Activated CD8-positive, alpha-beta T cell treated with anti-CD3 and anti-CD28 coated beads, Interleukin-2, amount 10 ng/mL, durations not matched to agents 7 days and 5 days (primary cell): ENCODE measurements at regions of chr1 and their contacts with region 1.

Region 1: GRCh38 chr1:206912445-206913095 is 9.2 kb downstream of the FCMR start:
- DNase-seq: peak; percentile 80
- ATAC-seq: peak; percentile 64
- H3K4me3 Mint-ChIP-seq: no peak overlapping the region
- H3K27ac Mint-ChIP-seq: no peak overlapping the region
- H3K4me1 Mint-ChIP-seq: peaks cover 65% of the 10 kb centered on the region
- H3K27me3 Mint-ChIP-seq: no peaks in the 10 kb centered on the region

Region 2: DNA sequence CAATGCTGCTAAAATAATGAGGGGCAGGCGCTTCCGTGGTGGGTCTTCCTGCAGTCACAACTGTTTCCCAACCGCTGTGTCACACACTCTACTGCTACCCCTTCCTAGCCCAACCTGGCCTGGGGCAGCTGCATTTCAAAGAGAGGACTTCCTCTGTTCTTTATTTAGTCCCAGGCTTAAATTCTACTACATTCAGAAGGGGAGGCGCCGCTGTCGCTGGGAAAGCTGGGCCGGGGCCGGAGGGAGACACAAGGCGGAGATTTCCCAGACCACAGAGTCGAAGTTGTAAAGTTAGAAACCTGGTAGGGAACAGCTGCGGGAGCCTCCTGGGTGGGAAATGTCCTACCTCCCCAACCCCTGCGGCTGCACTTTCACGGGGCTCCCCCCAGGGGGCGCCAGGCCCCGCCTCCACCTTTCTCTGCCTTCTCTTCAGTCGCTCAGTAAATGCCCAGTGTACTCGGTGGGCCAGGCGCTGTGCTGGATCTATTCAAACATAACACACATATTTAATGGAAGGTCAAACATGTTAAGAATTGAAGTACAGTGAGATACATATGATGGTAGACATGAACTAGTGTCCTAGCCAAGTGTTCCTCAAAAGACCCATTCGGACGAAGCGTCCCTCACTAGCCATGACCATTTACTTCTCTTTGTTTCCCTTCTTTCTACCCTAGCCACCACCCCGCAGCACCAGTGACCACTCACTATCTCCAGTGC is 254.1 kb before region 1 on chr1:
- CTCF ChIA-PET with region 1: interaction called, 23 read pairs
- POLR2A ChIA-PET with region 1: no interaction called
- DNase-seq: peak; percentile 71
- ATAC-seq: peak; percentile 84
- H3K4me3 Mint-ChIP-seq: no peak overlapping the region
- H3K27ac Mint-ChIP-seq: no peak overlapping the region
- H3K4me1 Mint-ChIP-seq: peaks cover 21% of the 10 kb centered on the region
- H3K27me3 Mint-ChIP-seq: peaks cover 34% of the 10 kb centered on the region

Region 3: GRCh38 chr1:206734499-206735142 is 177.9 kb before region 1 on chr1:
- CTCF ChIA-PET with region 1: interaction called, 95 read pairs
- POLR2A ChIA-PET with region 1: interaction called, 7 read pairs
- DNase-seq: peak; percentile 74
- ATAC-seq: peak; percentile 28
- H3K4me3 Mint-ChIP-seq: no peak overlapping the region
- H3K27ac Mint-ChIP-seq: peak overlapping the region; percentile 44
- H3K4me1 Mint-ChIP-seq: peaks cover 70% of the 10 kb centered on the region
- H3K27me3 Mint-ChIP-seq: no peaks in the 10 kb centered on the region

Region 4: GRCh38 chr1:206816390-206817287 is 95.9 kb before region 1 on chr1:
- CTCF ChIA-PET with region 1: interaction called, 185 read pairs
- POLR2A ChIA-PET with region 1: interaction called, 5 read pairs
- DNase-seq: peak; percentile 55
- ATAC-seq: peak; percentile 92
- H3K4me3 Mint-ChIP-seq: peak overlapping the region; percentile 13
- H3K27ac Mint-ChIP-seq: peak overlapping the region; percentile 89
- H3K4me1 Mint-ChIP-seq: peaks cover 44% of the 10 kb centered on the region
- H3K27me3 Mint-ChIP-seq: no peaks in the 10 kb centered on the region

Region 5: GRCh38 chr1:206878456-206878855 is 34.1 kb before region 1 on chr1:
- CTCF ChIA-PET with region 1: interaction called, 27 read pairs
- POLR2A ChIA-PET with region 1: no interaction called
- DNase-seq: no peak
- ATAC-seq: no peak
- H3K4me3 Mint-ChIP-seq: no peak overlapping the region
- H3K27ac Mint-ChIP-seq: no peak overlapping the region
- H3K4me1 Mint-ChIP-seq: no peaks in the 10 kb centered on the region
- H3K27me3 Mint-ChIP-seq: peaks cover 4% of the 10 kb centered on the region

Region 6: DNA sequence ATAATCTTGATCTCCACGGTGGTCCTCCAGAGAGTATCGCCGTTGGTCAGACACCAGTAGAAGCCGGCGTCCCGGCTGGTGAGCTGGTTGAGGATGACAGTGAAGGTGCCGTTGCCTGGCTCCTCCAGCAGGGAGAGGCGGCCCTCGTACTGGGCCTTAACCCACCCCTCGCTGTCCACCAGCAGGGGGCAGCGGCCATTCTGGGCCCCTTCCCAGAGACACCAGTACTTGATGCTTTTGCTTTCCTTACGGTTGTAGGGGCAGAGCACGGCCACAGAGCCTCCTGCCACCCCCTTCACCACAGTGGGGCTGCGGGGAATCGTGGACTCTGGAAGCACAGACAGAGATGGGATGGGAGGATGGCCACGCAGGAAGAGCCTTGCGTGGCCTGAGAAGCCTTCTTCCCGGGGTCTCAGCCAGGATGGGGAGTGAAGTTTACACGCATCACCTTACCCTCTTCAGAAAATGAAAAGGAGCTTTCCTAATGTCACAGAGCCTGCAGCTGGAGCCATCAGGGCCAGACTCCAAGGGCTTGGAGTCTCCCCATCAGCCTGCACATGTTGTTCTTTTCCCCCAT is 23.0 kb after region 1 on chr1:
- CTCF ChIA-PET with region 1: interaction called, 79 read pairs
- POLR2A ChIA-PET with region 1: no interaction called
- DNase-seq: peak; percentile 64
- ATAC-seq: peak; percentile 77
- H3K4me3 Mint-ChIP-seq: no peak overlapping the region
- H3K27ac Mint-ChIP-seq: no peak overlapping the region
- H3K4me1 Mint-ChIP-seq: peaks cover 34% of the 10 kb centered on the region
- H3K27me3 Mint-ChIP-seq: peaks cover 2% of the 10 kb centered on the region